Naive thymus-derived CD8-positive, alpha-beta T cell (primary cell): ENCODE measurements at regions of chr6 and their contacts with region 1.

Region 1: GRCh38 chr6:89080542-89081422 is at the start of gene PNRC1:
- DNase-seq: peak; percentile 97 to 100 (median 100)
- ATAC-seq: peak; percentile 67 to 68
- H3K4me3 Mint-ChIP-seq: peak within 1 kb of the TSS; percentile 89 to 99 (median 98)
- H3K27ac Mint-ChIP-seq: peak within 1 kb of the TSS; percentile 94 to 100 (median 99)
- H3K4me1 Mint-ChIP-seq: peaks cover 19 to 43% (median 40%) of the 10 kb centered on the region in 4 donors
- H3K27me3 Mint-ChIP-seq: no peaks in the 10 kb centered on the region
- polyA plus RNA-seq, gene PNRC1: 561 to 737 (median 604) TPM

Region 2: DNA sequence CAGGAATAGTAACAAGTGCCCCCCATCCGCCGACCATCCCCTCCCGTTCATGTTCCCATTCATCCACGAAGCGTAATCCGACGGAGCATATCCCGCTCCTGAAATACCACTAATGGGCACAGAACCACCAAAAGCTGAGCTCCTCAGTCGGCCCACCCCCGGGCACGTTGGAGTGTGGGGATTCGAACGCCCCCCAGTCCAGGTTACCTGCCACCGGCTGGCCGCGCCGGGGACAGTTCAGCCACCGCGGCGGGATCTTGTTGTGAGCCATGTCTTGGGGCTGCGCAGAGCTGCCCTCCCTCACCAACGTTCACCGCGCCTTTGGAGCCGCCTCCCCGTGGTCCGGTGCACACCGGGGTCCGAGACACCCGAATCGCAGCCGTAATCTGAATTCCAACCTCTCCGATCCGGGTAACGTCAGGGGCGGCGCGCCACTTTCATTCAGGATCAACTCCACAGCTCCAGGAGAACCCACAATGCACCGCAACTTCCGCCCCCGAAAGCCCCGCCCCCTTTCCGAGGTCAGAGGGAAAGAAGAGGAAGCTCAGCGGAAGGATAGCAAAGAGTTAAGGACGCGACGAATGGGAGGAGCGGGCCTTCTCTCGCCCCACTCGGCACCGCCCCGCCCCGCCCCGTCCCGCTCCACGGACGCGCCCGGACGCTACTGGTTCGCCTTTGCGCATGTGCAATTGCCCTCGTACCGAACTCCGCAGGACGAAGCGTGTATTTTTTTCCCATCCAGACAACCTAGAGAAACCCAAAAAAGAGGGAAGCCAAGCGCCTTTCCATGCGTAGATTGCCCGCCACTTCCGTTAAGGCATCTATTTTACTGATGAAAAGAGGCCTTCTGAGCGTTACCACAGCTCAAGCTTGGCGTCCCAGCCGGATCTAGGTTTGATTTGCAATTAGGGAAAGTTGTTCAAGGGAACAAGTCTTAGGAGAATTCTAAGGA is 117.4 kb before region 1 on chr6 and contains the start of gene RNGTT:
- POLR2A ChIA-PET with region 1: interaction called, 62 read pairs
- DNase-seq: peak; percentile 94 to 98 (median 96)
- ATAC-seq: peak; percentile 98
- H3K4me3 Mint-ChIP-seq: peak within 1 kb of the TSS; percentile 89 to 99 (median 98)
- H3K27ac Mint-ChIP-seq: peak within 1 kb of the TSS; percentile 89 to 97 (median 97)
- H3K4me1 Mint-ChIP-seq: peaks cover 26 to 60% (median 48%) of the 10 kb centered on the region in 4 donors
- H3K27me3 Mint-ChIP-seq: no peaks in the 10 kb centered on the region
- polyA plus RNA-seq, gene RNGTT: 14.7 to 17.6 (median 16.6) TPM

Region 3: GRCh38 chr6:88982720-88983119 is 98.1 kb before region 1 on chr6:
- POLR2A ChIA-PET with region 1: interaction called, 12 read pairs
- DNase-seq: peak in 4 of 10 donors; percentile 10 to 64 (median 63)
- ATAC-seq: peak; percentile 79 to 85
- H3K4me3 Mint-ChIP-seq: no peak overlapping the region
- H3K27ac Mint-ChIP-seq: no peak overlapping the region
- H3K4me1 Mint-ChIP-seq: peaks cover 0 to 2% (median under 1%) of the 10 kb centered on the region in 4 donors
- H3K27me3 Mint-ChIP-seq: peaks cover 0 to 3% (median 2%) of the 10 kb centered on the region in 5 donors

Region 4: DNA sequence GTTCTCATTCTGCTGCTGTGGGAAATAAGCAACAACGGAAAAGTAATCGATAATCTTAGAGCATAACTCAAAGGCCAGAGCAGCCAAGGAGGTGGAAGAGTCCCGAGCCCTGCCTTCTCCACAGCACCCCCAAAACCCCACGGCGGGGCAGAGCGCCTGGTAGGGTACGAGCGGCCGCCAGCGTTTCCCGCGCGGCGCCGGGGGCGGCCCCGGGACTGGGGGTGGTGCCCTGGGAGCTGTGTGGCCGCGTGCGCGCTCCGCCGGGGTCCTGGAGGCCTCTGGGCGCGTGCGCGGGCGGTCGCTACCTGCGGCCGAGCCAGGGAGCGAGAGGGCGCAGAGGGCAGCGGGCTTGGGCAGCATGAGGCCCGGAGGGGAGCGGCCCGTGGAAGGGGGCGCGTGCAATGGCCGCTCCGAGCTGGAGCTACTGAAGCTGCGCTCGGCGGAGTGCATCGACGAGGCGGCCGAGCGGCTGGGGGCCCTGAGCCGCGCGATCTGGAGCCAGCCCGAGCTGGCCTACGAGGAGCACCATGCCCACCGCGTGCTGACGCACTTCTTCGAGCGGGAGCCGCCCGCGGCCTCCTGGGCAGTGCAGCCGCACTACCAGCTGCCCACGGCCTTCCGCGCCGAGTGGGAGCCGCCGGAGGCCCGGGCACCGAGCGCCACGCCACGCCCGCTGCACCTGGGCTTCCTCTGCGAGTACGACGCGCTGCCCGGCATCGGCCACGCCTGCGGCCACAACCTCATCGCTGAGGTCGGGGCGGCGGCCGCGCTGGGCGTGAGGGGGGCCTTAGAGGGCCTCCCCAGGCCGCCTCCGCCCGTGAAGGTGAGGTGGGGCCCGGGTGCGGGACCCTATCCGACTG is 65.2 kb after region 1 on chr6 and contains the start of gene PM20D2:
- POLR2A ChIA-PET with region 1: interaction called, 105 read pairs
- DNase-seq: peak; percentile 53 to 76 (median 65)
- ATAC-seq: peak; percentile 78 to 83
- H3K4me3 Mint-ChIP-seq: peak within 1 kb of the TSS; percentile 85 to 99 (median 96)
- H3K27ac Mint-ChIP-seq: peak within 1 kb of the TSS; percentile 94 to 99 (median 95)
- H3K4me1 Mint-ChIP-seq: peaks cover 18 to 40% (median 28%) of the 10 kb centered on the region in 4 donors
- H3K27me3 Mint-ChIP-seq: no peaks in the 10 kb centered on the region
- polyA plus RNA-seq, gene PM20D2: 8.9 to 11.9 (median 9.9) TPM

Region 5: GRCh38 chr6:89352278-89353117 is 271.7 kb after region 1 on chr6 and contains the start of gene UBE2J1:
- POLR2A ChIA-PET with region 1: interaction called, 50 read pairs
- DNase-seq: peak; percentile 44 to 84 (median 66)
- ATAC-seq: peak; percentile 79 to 81
- H3K4me3 Mint-ChIP-seq: peak within 1 kb of the TSS; percentile 89 to 99 (median 96)
- H3K27ac Mint-ChIP-seq: peak within 1 kb of the TSS; percentile 95 to 99 (median 98)
- H3K4me1 Mint-ChIP-seq: peaks cover 35 to 84% (median 65%) of the 10 kb centered on the region in 4 donors
- H3K27me3 Mint-ChIP-seq: no peaks in the 10 kb centered on the region
- polyA plus RNA-seq, gene UBE2J1: 24.8 to 30.8 (median 27.5) TPM